Activated CD4-positive, alpha-beta memory T cell treated with anti-CD3 and anti-CD28 coated beads for 36 hours (primary cell): ENCODE measurements at regions of chr10 and their contacts with region 1.

Region 1: DNA sequence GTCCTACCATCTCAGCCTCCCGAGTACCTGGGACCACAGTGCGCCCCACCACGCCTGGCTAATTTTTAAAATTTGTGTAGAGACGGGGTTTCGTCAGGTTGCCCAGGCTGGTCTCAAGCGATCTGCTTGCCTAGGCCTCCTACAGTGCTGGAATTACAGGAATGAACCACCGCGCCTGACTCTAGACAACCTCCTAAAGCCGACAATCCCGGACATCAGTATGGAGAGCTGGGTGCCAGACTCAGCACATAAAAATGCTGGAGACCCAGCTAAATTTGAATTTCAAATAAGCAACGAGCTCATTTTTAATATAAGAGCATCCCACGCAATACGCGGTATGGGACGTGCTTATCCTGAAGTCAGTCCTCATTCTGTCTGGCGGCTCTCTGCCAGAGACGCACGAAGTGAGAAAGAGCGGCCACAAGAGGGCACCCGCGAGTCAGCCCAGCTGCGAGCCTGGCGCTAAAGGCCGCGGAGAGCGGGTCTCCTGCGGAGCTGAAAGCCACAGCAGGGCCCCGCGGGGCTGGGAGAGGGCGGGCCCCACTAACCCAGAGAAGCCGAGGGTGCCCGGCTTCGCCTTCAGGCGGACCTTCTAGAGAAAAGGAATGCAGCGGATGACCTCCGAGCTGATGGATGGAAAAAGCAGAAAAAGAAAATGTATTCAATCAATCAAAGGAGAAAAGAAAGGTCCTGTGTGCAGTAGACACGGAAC is 7.0 kb downstream of the CALY start:
- DNase-seq: peak; percentile 90
- H3K4me3 Mint-ChIP-seq: peak overlapping the region; percentile 35
- H3K27ac Mint-ChIP-seq: no peak overlapping the region
- H3K4me1 Mint-ChIP-seq: peaks cover 7% of the 10 kb centered on the region
- H3K27me3 Mint-ChIP-seq: peaks cover 30% of the 10 kb centered on the region

Region 2: GRCh38 chr10:133302209-133302608 is 27.4 kb before region 1 on chr10:
- CTCF ChIA-PET with region 1: interaction called, 13 read pairs
- POLR2A ChIA-PET with region 1: no interaction called
- intact Hi-C with region 1: no loop called
- DNase-seq: no peak
- H3K4me3 Mint-ChIP-seq: no peak overlapping the region
- H3K27ac Mint-ChIP-seq: no peak overlapping the region
- H3K4me1 Mint-ChIP-seq: peaks cover 23% of the 10 kb centered on the region
- H3K27me3 Mint-ChIP-seq: no peaks in the 10 kb centered on the region

Region 3: DNA sequence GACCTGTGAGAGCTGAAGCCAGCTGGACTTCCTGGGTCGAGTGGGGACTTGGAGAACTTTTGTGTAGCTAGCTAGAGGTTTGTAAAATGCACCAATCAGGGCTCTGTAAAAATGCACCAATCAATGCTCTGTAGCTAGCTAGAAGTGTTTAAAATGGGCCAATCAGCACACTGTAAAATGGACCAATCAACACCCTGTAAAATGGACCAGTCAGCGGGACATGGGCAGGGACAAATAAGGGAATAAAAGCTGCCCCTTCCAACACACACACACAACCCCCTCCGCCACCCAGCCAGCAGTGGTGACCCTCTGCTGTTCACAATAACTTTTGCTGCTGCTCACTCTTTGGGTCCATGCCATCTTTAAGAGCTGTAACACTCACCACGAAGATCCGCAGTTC is 13.8 kb before region 1 on chr10:
- CTCF ChIA-PET with region 1: interaction called, 30 read pairs
- POLR2A ChIA-PET with region 1: no interaction called
- intact Hi-C with region 1: no loop called
- DNase-seq: no peak
- H3K4me3 Mint-ChIP-seq: no peak overlapping the region
- H3K27ac Mint-ChIP-seq: no peak overlapping the region
- H3K4me1 Mint-ChIP-seq: peaks cover 9% of the 10 kb centered on the region
- H3K27me3 Mint-ChIP-seq: no peaks in the 10 kb centered on the region

Region 4: DNA sequence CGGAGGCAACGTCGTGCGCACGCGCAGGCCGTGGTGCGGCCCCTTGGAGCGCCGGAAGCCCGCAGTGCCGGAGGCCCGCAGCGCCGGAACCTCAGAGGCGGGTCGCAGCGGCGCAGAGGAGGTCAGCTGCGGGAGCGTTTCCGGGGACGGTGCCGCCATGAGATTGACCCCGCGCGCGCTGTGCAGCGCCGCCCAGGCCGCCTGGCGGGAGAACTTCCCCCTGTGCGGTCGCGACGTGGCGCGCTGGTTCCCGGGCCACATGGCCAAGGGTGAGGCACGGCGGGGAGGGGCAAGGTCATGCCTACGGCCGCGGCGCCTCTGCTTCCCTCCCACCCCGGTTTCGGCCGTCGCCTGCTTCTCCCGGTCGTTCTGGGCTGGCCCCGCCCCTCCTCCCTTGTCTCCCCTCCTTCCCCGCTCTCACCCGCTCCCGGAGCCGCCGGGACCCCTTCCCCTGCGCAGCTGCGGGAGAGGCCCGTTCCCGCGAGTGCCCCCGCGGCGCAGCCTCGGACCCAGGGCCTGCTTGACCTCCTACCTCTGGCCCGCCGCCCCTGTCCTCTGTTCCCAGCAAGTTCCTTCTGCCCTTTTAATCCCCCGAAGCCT is 64.5 kb after region 1 on chr10 and contains the start of gene MTG1:
- CTCF ChIA-PET with region 1: interaction called, 17 read pairs
- POLR2A ChIA-PET with region 1: no interaction called
- intact Hi-C with region 1: loop called (anchors 2 kb)
- DNase-seq: peak; percentile 96
- H3K4me3 Mint-ChIP-seq: peak within 1 kb of the TSS; percentile 96
- H3K27ac Mint-ChIP-seq: peak within 1 kb of the TSS; percentile 95
- H3K4me1 Mint-ChIP-seq: peaks cover 49% of the 10 kb centered on the region
- H3K27me3 Mint-ChIP-seq: no peaks in the 10 kb centered on the region
- total RNA-seq, gene MTG1: 33.9 to 40.3 TPM

Region 5: GRCh38 chr10:133489816-133490588 is 160.4 kb after region 1 on chr10:
- CTCF ChIA-PET with region 1: interaction called, 3 read pairs
- POLR2A ChIA-PET with region 1: no interaction called
- intact Hi-C with region 1: loop called (anchors 10 kb)
- DNase-seq: peak; percentile 29
- H3K4me3 Mint-ChIP-seq: no peak overlapping the region
- H3K27ac Mint-ChIP-seq: no peak overlapping the region
- H3K4me1 Mint-ChIP-seq: peaks cover 7% of the 10 kb centered on the region
- H3K27me3 Mint-ChIP-seq: no peaks in the 10 kb centered on the region